ENCODE measurements at regions of chr5 and their contacts with region 1.

Region 1: GRCh38 chr5:173204185-173204979 is 30.6 kb downstream of the NKX2-5 start:
- DNase-seq: peak in 1 of 4 experiments; percentile 51
- ATAC-seq: peak; percentile 66
- H3K4me3 ChIP-seq: no peak overlapping the region
- H3K27ac ChIP-seq: no peak overlapping the region
- H3K4me1 ChIP-seq: no peaks in the 10 kb centered on the region
- H3K27me3 ChIP-seq: peaks cover 24 to 57% of the 10 kb centered on the region in 2 experiments; a peak in 4 of 5 replicates
- CTCF ChIP-seq: peak; percentile 62 to 76 (median 70)
- EP300 ChIP-seq: no peak
- POLR2A ChIP-seq: no peak
- RAD21 ChIP-seq: peak; percentile 55 to 71; a peak in 3 of 4 replicates

Region 2: DNA sequence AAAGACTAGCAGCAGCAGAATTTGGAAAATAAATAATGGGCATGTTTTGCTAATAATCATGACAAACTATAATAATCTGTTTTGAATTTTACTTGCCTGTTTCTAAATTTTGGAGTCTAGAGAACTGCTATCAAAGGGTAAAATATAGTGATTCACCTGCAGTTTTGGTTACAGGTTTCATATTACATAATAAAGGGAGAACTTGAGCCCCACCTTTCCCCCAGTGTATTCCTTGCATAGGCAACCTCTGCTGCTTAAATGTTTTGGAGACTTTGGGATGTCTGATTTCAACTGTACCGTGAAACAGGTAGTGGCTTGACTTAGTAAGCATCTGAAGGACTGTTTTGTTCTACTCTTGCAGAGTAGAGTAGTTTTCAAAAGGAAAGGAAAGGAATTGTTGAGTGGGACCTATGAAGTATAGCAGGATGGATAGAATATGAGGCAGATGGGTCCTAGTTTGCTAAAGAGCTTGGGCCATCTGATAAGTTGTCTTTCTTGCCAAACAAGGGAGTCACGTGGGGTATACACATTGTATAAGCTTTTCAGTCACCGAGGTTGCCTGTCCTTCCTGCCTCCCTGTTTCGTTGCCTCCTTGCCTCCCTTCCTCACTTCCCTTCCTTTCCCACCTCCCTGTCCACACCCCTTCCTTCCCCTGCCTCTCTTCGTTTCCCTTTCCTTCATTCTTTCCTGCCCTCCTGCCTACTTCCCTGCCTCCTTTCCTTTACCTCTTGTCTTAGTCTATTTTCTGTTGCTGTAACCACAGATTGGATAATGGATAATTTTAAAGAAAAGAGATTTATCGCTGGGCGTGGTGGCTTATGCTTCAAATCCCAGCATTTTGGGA is 129.0 kb before region 1 on chr5:
- CTCF ChIA-PET with region 1: no interaction called
- POLR2A ChIA-PET with region 1: no interaction called
- in situ Hi-C with region 1: no loop called
- intact Hi-C with region 1: no loop called
- DNase-seq: no peak
- ATAC-seq: peak; percentile 49; the same call in 2 of the 3 replicates
- H3K4me3 ChIP-seq: no peak overlapping the region
- H3K27ac ChIP-seq: no peak overlapping the region
- H3K4me1 ChIP-seq: no peaks in the 10 kb centered on the region; a peak in 1 of 5 replicates
- H3K27me3 ChIP-seq: no peaks in the 10 kb centered on the region
- CTCF ChIP-seq: no peak
- EP300 ChIP-seq: no peak
- POLR2A ChIP-seq: no peak
- RAD21 ChIP-seq: no peak

Region 3: DNA sequence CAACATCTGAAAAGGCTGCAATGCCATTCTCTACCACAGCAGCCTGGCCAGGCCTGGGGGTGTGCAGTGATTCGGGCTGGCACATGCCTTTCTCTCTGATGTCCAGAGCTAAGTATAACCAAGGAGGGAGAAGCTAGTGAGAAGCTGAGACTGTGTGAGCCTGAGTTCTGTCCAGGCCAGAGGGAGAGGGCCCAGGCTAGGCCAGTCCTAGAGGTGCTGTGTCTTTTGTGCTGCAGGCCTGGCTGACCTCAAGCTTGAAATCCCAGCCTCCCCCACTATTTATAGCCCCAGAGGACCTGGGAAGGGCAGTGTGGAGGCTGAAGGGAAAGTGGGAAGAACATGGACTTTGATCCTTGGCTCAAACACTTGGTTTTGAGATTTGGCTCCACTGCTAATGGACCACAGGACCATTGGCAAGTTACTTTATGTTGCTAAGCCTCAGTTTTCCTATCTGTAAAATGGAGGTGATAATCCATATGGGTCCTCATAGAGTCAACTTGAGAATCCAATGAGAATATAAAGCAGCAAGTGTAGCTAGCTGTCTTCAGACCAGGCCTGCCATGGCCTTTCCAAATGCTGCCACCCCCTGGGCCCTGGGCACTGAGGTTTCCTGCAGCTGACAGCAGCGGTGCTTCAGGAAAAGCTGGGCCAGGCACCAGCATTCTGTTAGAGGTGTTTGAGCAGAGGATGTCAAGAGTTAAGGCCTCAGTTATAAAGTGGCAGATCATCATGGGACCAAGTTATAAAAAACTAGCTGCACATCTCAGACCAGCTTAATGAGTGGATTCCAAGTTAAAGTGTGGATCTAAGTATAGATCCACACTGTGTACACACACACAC is 39.0 kb before region 1 on chr5:
- CTCF ChIA-PET with region 1: interaction called, 3 read pairs
- POLR2A ChIA-PET with region 1: no interaction called
- in situ Hi-C with region 1: no loop called
- intact Hi-C with region 1: loop called (anchors 5 kb)
- DNase-seq: no peak
- ATAC-seq: no peak
- H3K4me3 ChIP-seq: no peak overlapping the region
- H3K27ac ChIP-seq: no peak overlapping the region
- H3K4me1 ChIP-seq: no peaks in the 10 kb centered on the region
- H3K27me3 ChIP-seq: peaks cover 3 to 4% of the 10 kb centered on the region in 2 experiments; a peak in 2 of 5 replicates
- CTCF ChIP-seq: no peak
- EP300 ChIP-seq: no peak
- POLR2A ChIP-seq: no peak
- RAD21 ChIP-seq: no peak

Region 4: GRCh38 chr5:173396311-173396993 is 192.1 kb after region 1 on chr5:
- CTCF ChIA-PET with region 1: no interaction called
- POLR2A ChIA-PET with region 1: no interaction called
- in situ Hi-C with region 1: no loop called
- intact Hi-C with region 1: no loop called
- DNase-seq: peak in 2 of 4 experiments; percentile 9 to 22
- ATAC-seq: peak; percentile 72
- H3K4me3 ChIP-seq: no peak overlapping the region
- H3K27ac ChIP-seq: no peak overlapping the region
- H3K4me1 ChIP-seq: no peaks in the 10 kb centered on the region
- H3K27me3 ChIP-seq: peaks cover 6 to 21% of the 10 kb centered on the region in 2 experiments
- CTCF ChIP-seq: peak in 2 of 3 experiments; percentile 19 to 35; a peak in 3 of 6 replicates
- EP300 ChIP-seq: no peak
- POLR2A ChIP-seq: no peak
- RAD21 ChIP-seq: peak in 1 of 2 experiments; percentile 24; a peak in 1 of 4 replicates

Measured in K562 (cell line).